Ascending aorta (tissue), 2 donors: ENCODE measurements at regions of chr5 and their contacts with region 1.

Region 1: GRCh38 chr5:73298772-73299630 is 126.0 kb downstream of the TMEM174 start:
- DNase-seq: peak in 1 of 2 donors; percentile 56
- H3K4me3 ChIP-seq: peak overlapping the region; percentile 49 to 55
- H3K27ac ChIP-seq: no peak overlapping the region
- H3K4me1 ChIP-seq: peaks cover 0 to 7% of the 10 kb centered on the region in 2 donors
- H3K27me3 ChIP-seq: peaks cover 8% of the 10 kb centered on the region
- CTCF ChIP-seq: peak; percentile 15 to 51 (median 24)

Region 2: GRCh38 chr5:73081093-73081492 is 217.9 kb before region 1 on chr5:
- intact Hi-C with region 1: loop called (anchors 5 kb)
- DNase-seq: no peak
- H3K4me3 ChIP-seq: no peak overlapping the region
- H3K27ac ChIP-seq: no peak overlapping the region
- H3K4me1 ChIP-seq: no peaks in the 10 kb centered on the region
- H3K27me3 ChIP-seq: no peaks in the 10 kb centered on the region
- CTCF ChIP-seq: no peak

Region 3: DNA sequence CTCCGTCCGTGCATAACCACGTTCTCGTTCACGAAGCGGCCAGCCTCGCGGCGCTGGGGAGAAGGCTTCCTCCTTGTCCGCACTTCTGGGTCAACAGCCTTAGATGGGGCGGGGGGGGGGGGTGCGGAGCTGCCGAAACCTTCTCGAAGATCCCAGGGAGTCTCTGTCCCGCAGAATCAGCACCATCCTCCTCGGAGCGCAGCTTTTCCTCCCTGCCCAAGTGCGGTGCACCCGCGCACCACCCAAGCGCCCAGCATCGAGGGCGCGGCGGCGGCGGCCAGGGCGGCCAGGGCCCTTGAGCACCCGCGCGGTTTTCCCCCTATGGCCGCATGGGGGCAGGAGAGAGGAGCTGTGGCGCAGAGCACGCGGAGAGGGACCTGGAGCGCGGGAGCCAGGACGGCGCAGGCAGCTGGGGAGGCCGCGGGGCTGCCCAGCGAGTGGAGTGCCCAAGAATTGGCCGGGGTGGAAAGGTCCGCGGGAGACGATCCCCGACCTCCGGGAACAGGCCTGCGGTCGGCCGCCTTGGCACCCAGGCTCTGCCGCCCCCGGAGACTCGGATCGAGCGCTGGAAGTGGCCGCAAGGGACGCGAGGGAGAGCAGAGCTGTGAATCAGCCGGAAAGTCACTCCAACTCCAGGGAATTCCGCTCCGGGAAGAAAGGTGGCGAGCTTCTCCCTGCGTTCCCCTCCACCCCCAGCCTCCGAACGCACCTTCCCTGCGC is 83.0 kb before region 1 on chr5:
- intact Hi-C with region 1: loop called (anchors 1 kb)
- DNase-seq: peak in 1 of 2 donors; percentile 90
- H3K4me3 ChIP-seq: peak overlapping the region; percentile 43 to 63
- H3K27ac ChIP-seq: peak overlapping the region; percentile 38 to 70
- H3K4me1 ChIP-seq: no peaks in the 10 kb centered on the region
- H3K27me3 ChIP-seq: no peaks in the 10 kb centered on the region
- CTCF ChIP-seq: peak; percentile 77 to 89 (median 88)

Region 4: DNA sequence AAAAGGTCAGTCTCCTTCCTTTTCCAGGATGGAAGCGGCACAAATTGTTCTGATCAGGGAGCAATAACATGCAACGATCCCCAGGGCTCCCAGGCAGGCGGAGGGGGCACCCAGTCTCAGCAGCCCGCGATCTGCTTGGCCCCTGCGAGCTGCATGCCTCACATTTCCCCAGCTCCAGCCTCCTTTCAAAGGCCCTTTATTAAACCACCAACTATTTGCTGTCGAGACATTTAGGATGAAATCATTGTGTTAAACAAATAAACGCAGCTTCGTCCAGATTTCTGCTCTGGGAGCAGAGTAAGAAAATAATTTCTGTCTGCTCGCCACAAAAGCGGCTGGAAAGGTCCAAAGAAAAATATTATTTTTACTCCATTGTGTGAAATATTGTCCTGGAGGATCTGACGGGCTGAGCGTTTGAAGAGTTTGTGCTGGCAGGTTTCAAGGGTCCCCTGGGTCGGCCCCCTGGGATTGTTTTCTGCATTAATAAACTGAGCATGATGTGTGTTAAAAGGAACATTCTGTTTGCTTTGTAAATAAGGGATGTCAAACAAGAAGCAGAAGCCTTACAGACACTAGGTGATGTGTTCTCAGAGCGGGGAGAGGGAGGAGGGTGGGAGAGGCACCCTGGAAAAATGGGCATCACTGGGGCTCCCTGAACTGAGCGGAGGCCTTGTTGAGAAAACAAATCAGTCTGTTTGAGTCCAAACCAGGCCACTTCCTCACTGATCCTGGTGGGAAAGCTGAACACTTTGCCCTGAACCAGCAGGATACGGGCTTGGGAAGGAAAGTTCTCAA is 39.5 kb after region 1 on chr5:
- intact Hi-C with region 1: loop called (anchors 5 kb)
- DNase-seq: no peak
- H3K4me3 ChIP-seq: peak overlapping the region in 1 of 2 donors; percentile 27
- H3K27ac ChIP-seq: peak overlapping the region; percentile 79 to 82
- H3K4me1 ChIP-seq: peaks cover 11 to 22% of the 10 kb centered on the region in 2 donors
- H3K27me3 ChIP-seq: no peaks in the 10 kb centered on the region
- CTCF ChIP-seq: no peak

Region 5: GRCh38 chr5:73454351-73455036 is 155.5 kb after region 1 on chr5:
- intact Hi-C with region 1: loop called (anchors 5 kb)
- DNase-seq: no peak
- H3K4me3 ChIP-seq: no peak overlapping the region
- H3K27ac ChIP-seq: no peak overlapping the region
- H3K4me1 ChIP-seq: peaks cover 0 to 7% of the 10 kb centered on the region in 2 donors
- H3K27me3 ChIP-seq: no peaks in the 10 kb centered on the region
- CTCF ChIP-seq: peak; percentile 39 to 74 (median 72)